ENCODE measurements at regions of chr18 and their contacts with region 1.

Region 1: DNA sequence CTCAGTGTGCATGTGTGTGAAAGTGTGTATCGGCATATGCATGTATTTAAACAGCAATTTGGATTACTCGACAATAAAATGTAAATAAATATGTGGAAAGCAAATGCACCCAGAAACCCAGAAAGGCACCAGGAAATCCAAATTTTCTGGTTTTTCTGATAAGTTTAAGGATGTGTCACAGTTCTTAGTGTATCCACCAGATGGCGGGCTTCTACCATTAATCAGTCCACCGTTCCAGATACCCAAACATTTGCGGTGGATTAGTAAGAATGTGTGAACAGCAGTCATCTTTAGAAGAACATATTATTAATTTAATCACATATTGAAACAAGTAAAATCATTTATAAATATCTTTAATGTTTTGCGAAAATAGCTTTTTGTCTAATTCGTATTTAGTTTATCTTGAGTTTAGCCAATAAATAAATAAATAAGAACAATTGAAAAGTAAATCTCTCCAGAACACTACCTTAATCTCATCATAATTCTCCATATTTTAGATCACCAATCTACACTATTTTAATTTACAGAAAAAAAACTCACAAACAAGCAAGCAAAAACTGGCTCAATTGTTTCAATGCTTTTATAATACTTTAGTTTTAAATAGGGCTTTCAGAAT is 298.9 kb downstream of the DSEL start:
- DNase-seq: peak; percentile 39
- ATAC-seq: peak; percentile 76
- H3K4me3 ChIP-seq: no peak overlapping the region
- H3K27ac ChIP-seq: no peak overlapping the region
- H3K4me1 ChIP-seq: no peaks in the 10 kb centered on the region
- H3K27me3 ChIP-seq: peaks cover 0 to 10% of the 10 kb centered on the region in 2 experiments; a peak in 1 of 5 replicates
- CTCF ChIP-seq: peak; percentile 71
- EP300 ChIP-seq: no peak
- POLR2A ChIP-seq: no peak
- RAD21 ChIP-seq: no peak

Region 2: GRCh38 chr18:67710639-67711038 is 493.0 kb after region 1 on chr18:
- CTCF ChIA-PET with region 1: no interaction called
- POLR2A ChIA-PET with region 1: no interaction called
- in situ Hi-C with region 1: no loop called
- intact Hi-C with region 1: loop called (anchors 2 kb)
- DNase-seq: peak; percentile 15
- ATAC-seq: peak; percentile 88
- H3K4me3 ChIP-seq: no peak overlapping the region
- H3K27ac ChIP-seq: no peak overlapping the region
- H3K4me1 ChIP-seq: no peaks in the 10 kb centered on the region
- H3K27me3 ChIP-seq: no peaks in the 10 kb centered on the region
- CTCF ChIP-seq: 0 out of 2 replicates have a peak, but pooled peaks have one; percentile 31
- EP300 ChIP-seq: no peak
- POLR2A ChIP-seq: no peak
- RAD21 ChIP-seq: no peak

Region 3: GRCh38 chr18:68623342-68623741 is 1405.7 kb after region 1 on chr18:
- CTCF ChIA-PET with region 1: interaction called, 11 read pairs
- POLR2A ChIA-PET with region 1: no interaction called
- in situ Hi-C with region 1: no loop called
- intact Hi-C with region 1: loop called (anchors 1 kb)
- DNase-seq: peak; percentile 47
- ATAC-seq: peak; percentile 84
- H3K4me3 ChIP-seq: no peak overlapping the region
- H3K27ac ChIP-seq: no peak overlapping the region
- H3K4me1 ChIP-seq: no peaks in the 10 kb centered on the region
- H3K27me3 ChIP-seq: no peaks in the 10 kb centered on the region; a peak in 1 of 5 replicates
- CTCF ChIP-seq: peak; percentile 78
- EP300 ChIP-seq: no peak
- POLR2A ChIP-seq: no peak
- RAD21 ChIP-seq: 0 out of 2 replicates have a peak, but pooled peaks have one; percentile 30

Region 4: DNA sequence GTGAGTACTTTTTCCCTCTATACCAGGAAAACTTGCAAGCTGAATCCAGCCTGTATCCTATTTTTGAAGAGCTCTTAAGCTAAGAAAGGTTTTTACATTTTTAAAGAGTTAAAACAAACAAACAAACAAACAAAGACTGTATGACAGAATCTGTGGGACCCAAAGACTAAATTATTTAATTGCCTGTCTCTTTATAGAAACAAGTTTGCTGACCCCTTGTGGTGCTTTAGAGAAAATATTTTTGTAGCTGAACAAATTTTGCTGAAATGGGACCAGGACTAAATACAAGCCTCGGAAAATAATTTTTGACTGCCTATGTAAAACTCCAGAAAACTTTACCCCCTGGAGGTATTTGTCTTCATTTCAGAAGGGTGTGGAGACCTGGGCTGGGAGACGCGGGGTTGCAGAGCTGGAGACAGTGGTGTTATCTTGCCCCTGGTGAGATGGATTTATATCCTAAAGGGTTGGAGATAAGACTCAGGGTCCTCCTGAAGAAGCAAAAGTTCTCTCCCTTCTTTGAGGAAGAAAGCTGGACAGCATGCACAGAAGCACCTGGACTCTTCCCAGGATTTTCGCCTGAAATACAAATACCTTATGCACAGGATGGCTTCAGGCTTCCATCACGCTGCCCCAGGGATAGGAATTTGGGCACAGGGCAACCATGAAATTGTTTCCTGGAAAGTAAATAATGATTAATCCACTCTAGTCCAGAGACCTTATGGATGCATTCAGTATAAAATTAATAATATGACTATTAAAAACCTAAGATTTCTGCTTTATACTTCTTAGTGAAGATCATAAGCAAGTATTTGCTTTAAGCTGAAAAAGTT is 1442.9 kb after region 1 on chr18:
- CTCF ChIA-PET with region 1: interaction called, 7 read pairs
- POLR2A ChIA-PET with region 1: no interaction called
- in situ Hi-C with region 1: loop called (anchors 10 kb)
- intact Hi-C with region 1: loop called (anchors 1 kb)
- DNase-seq: peak; percentile 33
- ATAC-seq: no peak
- H3K4me3 ChIP-seq: no peak overlapping the region
- H3K27ac ChIP-seq: no peak overlapping the region
- H3K4me1 ChIP-seq: no peaks in the 10 kb centered on the region
- H3K27me3 ChIP-seq: no peaks in the 10 kb centered on the region
- CTCF ChIP-seq: peak; percentile 32; the same call in 1 of the 2 replicates
- EP300 ChIP-seq: no peak
- POLR2A ChIP-seq: no peak
- RAD21 ChIP-seq: no peak

Region 5: GRCh38 chr18:68735483-68736343 is 1518.1 kb after region 1 on chr18:
- CTCF ChIA-PET with region 1: interaction called, 7 read pairs
- POLR2A ChIA-PET with region 1: no interaction called
- in situ Hi-C with region 1: no loop called
- intact Hi-C with region 1: loop called (anchors 1 kb)
- DNase-seq: peak; percentile 28
- ATAC-seq: peak; percentile 80
- H3K4me3 ChIP-seq: no peak overlapping the region
- H3K27ac ChIP-seq: no peak overlapping the region
- H3K4me1 ChIP-seq: no peaks in the 10 kb centered on the region
- H3K27me3 ChIP-seq: no peaks in the 10 kb centered on the region
- CTCF ChIP-seq: peak; percentile 75
- EP300 ChIP-seq: no peak
- POLR2A ChIP-seq: no peak
- RAD21 ChIP-seq: peak; percentile 59